ENCODE measurements at regions of chr4 and their contacts with region 1.

Region 1: GRCh38 chr4:40822420-40823166 is 72.8 kb downstream of the NSUN7 start:
- DNase-seq: no peak
- H3K4me3 ChIP-seq: no peak overlapping the region
- H3K27ac ChIP-seq: no peak overlapping the region
- H3K4me1 ChIP-seq: no peaks in the 10 kb centered on the region
- H3K27me3 ChIP-seq: no peaks in the 10 kb centered on the region
- CTCF ChIP-seq: no peak
- POLR2A ChIP-seq: no peak

Region 2: GRCh38 chr4:41146716-41147506 is 324.3 kb after region 1 on chr4:
- CTCF ChIA-PET with region 1: no interaction called
- POLR2A ChIA-PET with region 1: no interaction called
- dilution Hi-C with region 1: no loop called
- intact Hi-C with region 1: no loop called
- DNase-seq: peak; percentile 53
- H3K4me3 ChIP-seq: no peak overlapping the region
- H3K27ac ChIP-seq: peak overlapping the region; percentile 26
- H3K4me1 ChIP-seq: peaks cover 53% of the 10 kb centered on the region
- H3K27me3 ChIP-seq: no peaks in the 10 kb centered on the region
- CTCF ChIP-seq: no peak
- POLR2A ChIP-seq: no peak

Region 3: GRCh38 chr4:41678086-41678816 is 855.7 kb after region 1 on chr4:
- CTCF ChIA-PET with region 1: no interaction called
- POLR2A ChIA-PET with region 1: interaction called, 10 read pairs
- dilution Hi-C with region 1: no loop called
- intact Hi-C with region 1: no loop called
- DNase-seq: no peak
- H3K4me3 ChIP-seq: no peak overlapping the region
- H3K27ac ChIP-seq: no peak overlapping the region
- H3K4me1 ChIP-seq: no peaks in the 10 kb centered on the region
- H3K27me3 ChIP-seq: peaks cover 7 to 12% of the 10 kb centered on the region in 2 experiments
- CTCF ChIP-seq: no peak
- POLR2A ChIP-seq: no peak

Measured in endothelial cell of umbilical vein (primary cell).